Activated B cell treated with CpG ODN at 0.5 μM for 24 hours (primary cell): ENCODE measurements at regions of chr14 and their contacts with region 1.

Region 1: DNA sequence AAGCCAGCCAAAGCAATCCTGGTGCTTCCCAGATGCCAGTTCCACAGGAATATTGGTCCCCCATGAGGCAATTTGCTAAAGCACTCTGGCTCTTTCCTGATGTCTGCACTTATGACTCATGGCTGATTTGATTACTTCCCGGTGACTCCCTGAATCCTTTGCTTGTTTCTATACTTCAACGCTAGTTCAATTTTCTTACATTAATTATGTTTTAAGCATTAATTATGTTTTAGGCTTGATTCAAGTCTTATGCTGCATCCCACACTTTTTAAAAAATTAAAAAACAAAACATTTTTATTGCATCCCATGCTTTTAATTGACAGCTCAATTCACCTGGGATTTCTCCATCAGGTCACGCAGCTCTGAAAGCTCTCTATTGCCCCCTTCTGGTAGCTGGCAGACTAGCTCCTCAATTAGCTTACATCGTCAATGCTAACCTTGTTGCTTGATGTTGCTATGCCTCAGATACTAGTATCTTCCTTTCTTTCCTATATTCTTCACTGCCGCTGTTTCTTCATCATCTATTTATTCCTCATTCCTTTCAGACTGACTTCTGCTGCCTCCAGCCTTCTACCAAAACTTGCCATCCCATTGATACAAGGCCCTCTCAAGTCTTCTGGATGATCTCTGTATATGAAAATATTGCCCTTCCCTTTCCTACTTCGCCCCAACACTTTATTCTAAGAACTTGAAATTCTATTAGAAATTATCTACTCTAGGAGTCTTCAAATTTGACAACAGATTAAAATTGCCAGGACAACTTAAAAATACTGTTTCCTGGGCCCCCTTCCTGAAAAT is 32.0 kb downstream of the TSHR start:
- DNase-seq: no peak
- ATAC-seq: peak; percentile 64
- H3K4me3 Mint-ChIP-seq: no peak overlapping the region
- H3K27ac Mint-ChIP-seq: no peak overlapping the region
- H3K4me1 Mint-ChIP-seq: peaks cover 4% of the 10 kb centered on the region
- H3K27me3 Mint-ChIP-seq: peaks cover 8% of the 10 kb centered on the region
- CTCF ChIP-seq: peak; percentile 82

Region 2: DNA sequence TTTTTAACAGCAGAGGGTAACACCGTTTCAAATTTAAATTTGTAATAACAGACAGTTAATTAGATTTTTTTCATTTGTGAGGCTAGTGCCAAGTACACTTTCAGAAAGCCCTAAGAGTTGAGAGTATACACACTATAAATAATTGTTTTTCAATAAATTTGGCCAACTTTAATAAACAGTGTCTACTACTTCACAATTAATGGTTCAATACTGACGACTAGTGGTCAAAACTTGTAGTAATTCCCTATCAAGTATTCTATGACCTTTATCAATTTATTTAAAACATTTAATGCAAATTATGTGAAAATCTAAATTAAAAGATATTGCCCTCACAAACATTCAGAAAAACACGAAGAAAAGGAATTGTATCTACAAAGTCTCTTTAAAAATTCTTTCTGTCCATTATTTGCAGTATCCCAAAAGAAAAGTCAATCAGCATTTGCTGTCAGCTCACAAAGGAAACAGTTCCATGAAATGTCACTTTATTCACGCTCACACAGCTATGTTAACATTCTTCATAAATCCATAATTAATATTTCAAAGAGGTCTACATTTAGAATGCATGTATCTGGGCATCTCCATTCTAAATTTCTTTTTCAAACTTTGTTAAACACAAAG is 137.1 kb before region 1 on chr14:
- CTCF ChIA-PET with region 1: no interaction called
- POLR2A ChIA-PET with region 1: no interaction called
- intact Hi-C with region 1: loop called (anchors 5 kb)
- DNase-seq: no peak
- ATAC-seq: no peak
- H3K4me3 Mint-ChIP-seq: no peak overlapping the region
- H3K27ac Mint-ChIP-seq: no peak overlapping the region
- H3K4me1 Mint-ChIP-seq: no peaks in the 10 kb centered on the region
- H3K27me3 Mint-ChIP-seq: no peaks in the 10 kb centered on the region
- CTCF ChIP-seq: peak; percentile 46

Region 3: GRCh38 chr14:80954687-80955299 is 32.6 kb before region 1 on chr14:
- CTCF ChIA-PET with region 1: interaction called, 150 read pairs
- POLR2A ChIA-PET with region 1: interaction called, 5 read pairs
- intact Hi-C with region 1: loop called (anchors 1 kb)
- DNase-seq: peak; percentile 56
- ATAC-seq: peak; percentile 57
- H3K4me3 Mint-ChIP-seq: peak overlapping the region; percentile 84
- H3K27ac Mint-ChIP-seq: peak overlapping the region; percentile 36
- H3K4me1 Mint-ChIP-seq: peaks cover 48% of the 10 kb centered on the region
- H3K27me3 Mint-ChIP-seq: peaks cover 9% of the 10 kb centered on the region
- CTCF ChIP-seq: no peak

Region 4: DNA sequence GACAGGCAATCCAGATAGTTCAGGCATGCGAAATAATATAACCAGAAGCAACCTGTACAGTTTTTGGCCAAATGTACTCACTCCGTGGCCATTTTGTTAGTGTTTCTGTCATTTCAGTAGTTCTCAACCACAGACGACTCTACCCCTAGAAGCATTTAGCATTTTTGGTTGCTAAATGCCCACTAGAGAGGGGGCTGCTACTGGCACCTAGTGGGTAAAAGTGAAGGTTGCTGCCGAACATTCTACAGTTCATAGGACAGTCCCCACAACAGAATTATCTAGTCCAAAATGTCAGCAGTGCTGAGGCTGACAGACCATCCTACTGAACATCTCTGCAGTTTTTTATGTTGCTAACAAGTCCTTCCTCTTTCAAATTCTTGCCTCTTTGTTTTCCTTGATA is 75.4 kb after region 1 on chr14:
- CTCF ChIA-PET with region 1: no interaction called
- POLR2A ChIA-PET with region 1: no interaction called
- intact Hi-C with region 1: loop called (anchors 2 kb)
- DNase-seq: no peak
- ATAC-seq: peak; percentile 69
- H3K4me3 Mint-ChIP-seq: no peak overlapping the region
- H3K27ac Mint-ChIP-seq: no peak overlapping the region
- H3K4me1 Mint-ChIP-seq: no peaks in the 10 kb centered on the region
- H3K27me3 Mint-ChIP-seq: peaks cover 6% of the 10 kb centered on the region
- CTCF ChIP-seq: no peak

Region 5: GRCh38 chr14:81211844-81212243 is 224.4 kb after region 1 on chr14:
- CTCF ChIA-PET with region 1: interaction called, 7 read pairs
- POLR2A ChIA-PET with region 1: no interaction called
- intact Hi-C with region 1: loop called (anchors 2 kb)
- DNase-seq: no peak
- ATAC-seq: peak; percentile 80
- H3K4me3 Mint-ChIP-seq: no peak overlapping the region
- H3K27ac Mint-ChIP-seq: no peak overlapping the region
- H3K4me1 Mint-ChIP-seq: peaks cover 53% of the 10 kb centered on the region
- H3K27me3 Mint-ChIP-seq: no peaks in the 10 kb centered on the region
- CTCF ChIP-seq: no peak

Region 6: GRCh38 chr14:81464247-81465002 is 477.0 kb after region 1 on chr14:
- CTCF ChIA-PET with region 1: interaction called, 10 read pairs
- POLR2A ChIA-PET with region 1: no interaction called
- intact Hi-C with region 1: no loop called
- DNase-seq: no peak
- ATAC-seq: peak; percentile 76
- H3K4me3 Mint-ChIP-seq: peak overlapping the region; percentile 81
- H3K27ac Mint-ChIP-seq: peak overlapping the region; percentile 76
- H3K4me1 Mint-ChIP-seq: peaks cover 6% of the 10 kb centered on the region
- H3K27me3 Mint-ChIP-seq: no peaks in the 10 kb centered on the region
- CTCF ChIP-seq: peak; percentile 77